Activated CD4-positive, alpha-beta T cell treated with anti-CD3 and anti-CD28 coated beads, Interleukin-2, amount 10 ng/mL, durations not matched to agents 7 days and 5 days (primary cell): ENCODE measurements at regions of chr12 and their contacts with region 1.

Region 1: DNA sequence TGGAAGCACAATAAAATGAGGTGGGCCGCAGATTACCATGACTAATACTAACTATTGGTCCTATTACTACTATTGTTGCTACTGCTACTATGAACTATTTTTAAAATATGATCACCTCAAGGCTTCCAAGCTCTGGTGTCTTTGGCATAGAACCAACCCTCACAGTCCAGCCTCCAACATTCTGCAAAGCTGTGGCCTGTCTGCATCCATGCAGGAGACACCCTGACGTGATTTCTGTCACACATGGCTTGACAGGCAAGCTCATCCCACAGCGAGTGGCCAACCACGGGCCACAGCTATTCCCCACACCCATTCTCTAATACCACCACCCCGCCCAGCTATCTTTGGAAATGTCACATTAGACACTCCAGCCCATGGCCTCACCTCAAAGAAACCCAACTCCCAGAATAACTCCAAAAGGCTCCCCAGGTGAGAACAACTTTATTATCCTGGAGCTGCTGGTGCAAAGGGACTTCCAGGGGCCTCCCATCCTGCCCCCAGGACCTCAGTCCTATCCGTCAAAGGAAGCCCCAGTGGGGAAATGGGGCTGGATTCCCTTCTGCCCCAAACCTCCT is 14.4 kb downstream of the ISCU start:
- DNase-seq: no peak
- H3K4me3 Mint-ChIP-seq: no peak overlapping the region
- H3K27ac Mint-ChIP-seq: no peak overlapping the region
- H3K4me1 Mint-ChIP-seq: peaks cover 49% of the 10 kb centered on the region
- H3K27me3 Mint-ChIP-seq: peaks cover 9% of the 10 kb centered on the region

Region 2: GRCh38 chr12:108562348-108563135 is 14.2 kb before region 1 on chr12 and contains the start of gene ISCU:
- CTCF ChIA-PET with region 1: interaction called, 12 read pairs
- POLR2A ChIA-PET with region 1: no interaction called
- DNase-seq: peak; percentile 98
- H3K4me3 Mint-ChIP-seq: peak within 1 kb of the TSS; percentile 100
- H3K27ac Mint-ChIP-seq: peak within 1 kb of the TSS; percentile 99
- H3K4me1 Mint-ChIP-seq: peaks cover 65% of the 10 kb centered on the region
- H3K27me3 Mint-ChIP-seq: no peaks in the 10 kb centered on the region
- total RNA-seq, gene ISCU: 60.8 to 66.0 TPM